SK-N-SH (cell line): ENCODE measurements at regions of chr12 and their contacts with region 1.

Region 1: GRCh38 chr12:53543539-53543938 is 36.3 kb upstream of the NPFF start:
- DNase-seq: peak; percentile 70
- H3K4me3 ChIP-seq: no peak overlapping the region
- H3K27ac ChIP-seq: peak overlapping the region in 1 of 2 experiments; percentile 19; a peak in 1 of 4 replicates
- H3K4me1 ChIP-seq: 0 out of 4 replicates have a peak, but pooled peaks cover 0 to 4% of the 10 kb centered on the region in 2 experiments
- H3K27me3 ChIP-seq: no peaks in the 10 kb centered on the region
- CTCF ChIP-seq: peak; percentile 86
- EP300 ChIP-seq: no peak
- RAD21 ChIP-seq: peak; percentile 89

Region 2: DNA sequence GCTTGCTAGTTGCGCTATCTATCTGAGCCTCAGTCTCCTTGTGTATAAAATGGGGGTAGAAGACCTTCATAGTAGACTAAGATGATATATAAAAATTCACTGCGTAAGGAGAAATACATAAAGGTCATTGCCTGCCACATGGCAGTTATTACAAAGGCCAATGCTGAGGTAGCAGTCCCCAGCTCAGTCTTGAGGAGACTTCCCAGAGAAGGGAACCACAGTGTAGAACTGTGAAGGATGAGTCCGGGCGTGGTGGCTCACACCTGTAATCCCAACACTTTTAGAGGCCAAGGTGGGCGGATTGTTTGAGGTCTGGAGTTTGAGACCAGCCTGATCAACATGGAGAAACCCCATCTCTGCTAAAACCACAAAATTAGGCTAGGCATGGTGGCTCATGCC is 190.3 kb before region 1 on chr12:
- CTCF ChIA-PET with region 1: no interaction called
- POLR2A ChIA-PET with region 1: no interaction called
- DNase-seq: no peak
- H3K4me3 ChIP-seq: no peak overlapping the region
- H3K27ac ChIP-seq: no peak overlapping the region
- H3K4me1 ChIP-seq: no peaks in the 10 kb centered on the region
- H3K27me3 ChIP-seq: no peaks in the 10 kb centered on the region
- CTCF ChIP-seq: no peak
- EP300 ChIP-seq: no peak
- RAD21 ChIP-seq: no peak

Region 3: GRCh38 chr12:53379389-53380103 is 164.0 kb before region 1 on chr12:
- CTCF ChIA-PET with region 1: no interaction called
- POLR2A ChIA-PET with region 1: no interaction called
- DNase-seq: peak; percentile 91
- H3K4me3 ChIP-seq: peak overlapping the region; percentile 52 to 59
- H3K27ac ChIP-seq: peak overlapping the region; percentile 89 to 96
- H3K4me1 ChIP-seq: peaks cover 29 to 32% of the 10 kb centered on the region in 2 experiments
- H3K27me3 ChIP-seq: no peaks in the 10 kb centered on the region
- CTCF ChIP-seq: no peak
- EP300 ChIP-seq: no peak
- RAD21 ChIP-seq: no peak

Region 4: DNA sequence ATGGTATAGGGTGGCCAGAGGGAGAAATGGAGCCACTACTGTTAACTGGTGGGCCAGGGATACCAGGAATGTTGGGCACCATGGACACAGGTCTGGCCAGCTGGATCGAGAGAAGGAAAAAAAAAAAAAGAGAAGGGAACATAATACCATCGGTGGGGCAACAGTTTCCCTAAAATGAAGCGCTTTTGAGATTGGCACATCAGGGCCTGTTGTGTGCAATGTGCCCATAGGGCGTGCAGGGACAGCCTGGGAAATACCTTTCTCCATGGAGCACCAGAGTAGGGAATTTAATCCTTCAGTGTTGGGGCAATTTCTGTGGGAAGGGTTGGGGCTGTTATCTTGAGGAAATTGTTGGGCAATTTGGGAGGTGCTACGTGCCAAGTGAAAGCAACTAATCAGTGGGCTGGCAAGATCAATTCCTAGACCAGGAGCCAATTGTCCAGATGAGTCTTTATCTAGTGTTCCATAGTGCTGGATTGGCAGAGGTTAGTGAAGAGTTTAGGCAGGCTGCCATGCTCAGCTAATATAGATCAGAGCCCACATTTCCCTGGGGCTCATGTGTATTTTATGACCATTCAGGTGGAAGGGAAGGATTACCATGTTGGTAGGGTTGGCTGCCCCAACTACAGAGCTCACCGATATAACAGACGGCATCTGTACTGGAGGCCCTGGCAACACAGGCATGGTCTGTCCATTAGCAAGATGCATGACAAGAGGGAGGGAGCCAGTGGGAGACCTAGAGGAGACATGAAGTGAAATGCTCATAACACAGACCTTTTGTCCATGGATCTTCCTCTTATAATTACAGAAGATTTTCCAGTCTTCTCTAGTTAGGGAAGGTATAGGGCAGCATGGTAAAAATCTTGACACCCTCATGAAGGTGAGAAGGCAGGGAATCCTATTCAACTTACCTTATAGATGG is 10.8 kb before region 1 on chr12:
- CTCF ChIA-PET with region 1: interaction called, 21 read pairs
- POLR2A ChIA-PET with region 1: no interaction called
- DNase-seq: no peak
- H3K4me3 ChIP-seq: no peak overlapping the region
- H3K27ac ChIP-seq: no peak overlapping the region
- H3K4me1 ChIP-seq: no peaks in the 10 kb centered on the region
- H3K27me3 ChIP-seq: no peaks in the 10 kb centered on the region
- CTCF ChIP-seq: no peak
- EP300 ChIP-seq: no peak
- RAD21 ChIP-seq: no peak

Region 5: GRCh38 chr12:53568809-53569557 is 25.4 kb after region 1 on chr12:
- CTCF ChIA-PET with region 1: interaction called, 22 read pairs
- POLR2A ChIA-PET with region 1: no interaction called
- DNase-seq: no peak
- H3K4me3 ChIP-seq: no peak overlapping the region
- H3K27ac ChIP-seq: peak overlapping the region in 1 of 2 experiments; percentile 13; a peak in 1 of 4 replicates
- H3K4me1 ChIP-seq: peaks cover 0 to 4% of the 10 kb centered on the region in 2 experiments; a peak in 2 of 4 replicates
- H3K27me3 ChIP-seq: no peaks in the 10 kb centered on the region
- CTCF ChIP-seq: no peak
- EP300 ChIP-seq: no peak
- RAD21 ChIP-seq: no peak

Region 6: GRCh38 chr12:53625946-53626701 is 82.6 kb after region 1 on chr12 and contains the start of gene ATF7:
- CTCF ChIA-PET with region 1: interaction called, 10 read pairs
- POLR2A ChIA-PET with region 1: no interaction called
- DNase-seq: peak; percentile 93
- H3K4me3 ChIP-seq: peak within 1 kb of the TSS; percentile 75 to 77
- H3K27ac ChIP-seq: peak within 1 kb of the TSS; percentile 91 to 96
- H3K4me1 ChIP-seq: peaks cover 5% of the 10 kb centered on the region in 2 experiments; a peak in 3 of 4 replicates
- H3K27me3 ChIP-seq: no peaks in the 10 kb centered on the region
- CTCF ChIP-seq: no peak
- EP300 ChIP-seq: no peak; a peak in 2 of 4 replicates
- RAD21 ChIP-seq: peak; percentile 23; the same call in 1 of the 2 replicates
- polyA plus RNA-seq, gene ATF7: 12.8 and 17.3 TPM in 2 replicates